Left cardiac atrium (tissue), 4 donors: ENCODE measurements at regions of chr9 and their contacts with region 1.

Region 1: DNA sequence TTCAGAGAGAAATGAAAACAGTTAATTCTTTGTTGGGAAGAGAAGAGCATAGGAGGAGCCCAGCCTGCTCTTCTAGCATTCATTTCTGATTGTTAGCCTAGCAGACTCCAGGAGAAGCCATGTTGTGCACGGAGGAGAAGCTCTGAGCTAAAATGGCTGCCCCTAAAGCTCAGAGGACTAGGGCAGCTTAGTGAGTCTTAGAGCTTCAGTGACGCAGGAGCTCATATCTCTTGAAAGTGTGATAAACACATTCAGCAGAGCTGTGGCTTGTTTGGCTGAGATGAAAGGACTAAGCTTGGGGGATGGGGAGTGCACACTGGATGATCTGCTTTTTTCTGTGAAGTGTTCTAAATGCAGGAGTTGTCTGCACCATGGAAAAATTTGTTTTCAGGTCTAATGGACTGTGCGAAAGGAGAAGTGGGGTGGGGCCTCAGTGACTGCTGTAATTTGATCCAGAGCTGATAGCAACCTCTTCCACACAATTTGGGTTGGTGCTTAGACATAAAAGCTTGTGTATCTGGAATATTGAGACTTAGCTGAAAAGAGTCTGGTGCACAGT is 58.5 kb downstream of the ZNF462 start:
- DNase-seq: peak; percentile 46
- ATAC-seq: peak; percentile 93 to 95

Region 2: GRCh38 chr9:106717686-106718085 is 203.7 kb before region 1 on chr9:
- intact Hi-C with region 1: no loop called
- DNase-seq: no peak
- ATAC-seq: peak in 1 of 2 donors; percentile 75

Region 3: DNA sequence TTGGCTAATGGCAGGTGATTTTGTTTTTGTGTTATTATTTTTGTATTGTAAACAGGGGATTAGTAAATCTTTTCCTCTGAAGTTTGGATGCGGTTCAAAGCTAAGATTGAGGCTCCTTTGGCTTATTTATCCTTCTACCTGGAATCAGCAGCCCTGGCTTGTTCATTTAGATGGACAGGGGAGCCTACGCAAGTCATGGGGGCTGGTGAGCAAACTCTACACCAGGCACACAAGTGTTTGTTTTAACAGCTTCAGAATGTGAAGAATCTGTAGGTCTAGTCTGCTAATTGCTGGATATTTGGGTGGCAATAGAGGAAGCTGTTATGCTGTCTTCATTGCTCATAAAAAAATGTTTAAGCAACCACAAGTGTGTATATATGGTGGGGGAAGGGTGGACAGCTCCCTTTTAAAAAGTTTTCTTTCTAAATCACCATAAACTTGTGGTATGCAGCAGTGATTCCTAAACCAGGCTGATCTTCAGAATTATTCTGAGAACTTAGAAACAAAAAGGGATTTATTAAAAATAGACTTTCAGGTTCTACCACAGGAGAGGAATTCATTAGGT is 37.7 kb before region 1 on chr9:
- intact Hi-C with region 1: loop called in 1 of 2 experiments (anchors 5 kb)
- DNase-seq: no peak
- ATAC-seq: no peak